ENCODE measurements at regions of chr20 and their contacts with region 1.

Region 1: GRCh38 chr20:55626716-55627115 is 378.6 kb downstream of the CBLN4 start:
- DNase-seq: no peak
- ATAC-seq: no peak
- H3K4me3 ChIP-seq: no peak overlapping the region
- H3K27ac ChIP-seq: no peak overlapping the region
- H3K4me1 ChIP-seq: no peaks in the 10 kb centered on the region
- H3K27me3 ChIP-seq: no peaks in the 10 kb centered on the region
- CTCF ChIP-seq: no peak

Region 2: DNA sequence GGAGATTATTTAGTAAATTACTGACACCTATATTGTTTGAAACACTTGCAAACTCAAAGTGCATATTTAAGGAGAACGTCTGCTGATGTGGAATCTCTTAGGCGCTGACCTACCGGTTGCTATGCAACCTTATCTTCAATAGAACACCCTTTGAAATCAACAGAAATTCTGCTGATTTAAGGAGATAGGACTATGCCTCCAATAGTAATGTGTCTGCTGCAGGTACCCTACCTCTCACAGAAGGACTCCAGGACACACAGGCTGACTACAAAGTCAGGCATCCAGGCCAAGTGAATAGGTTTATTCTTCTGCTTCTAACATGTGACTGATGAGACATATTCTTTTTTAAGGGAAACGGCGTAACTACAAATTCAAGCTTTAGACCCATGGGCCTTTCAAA is 66.9 kb after region 1 on chr20:
- intact Hi-C with region 1: loop called in 1 of 10 experiments (anchors 10 kb)
- DNase-seq: no peak
- ATAC-seq: no peak
- H3K4me3 ChIP-seq: no peak overlapping the region
- H3K27ac ChIP-seq: no peak overlapping the region
- H3K4me1 ChIP-seq: no peaks in the 10 kb centered on the region
- H3K27me3 ChIP-seq: no peaks in the 10 kb centered on the region
- CTCF ChIP-seq: no peak

Region 3: DNA sequence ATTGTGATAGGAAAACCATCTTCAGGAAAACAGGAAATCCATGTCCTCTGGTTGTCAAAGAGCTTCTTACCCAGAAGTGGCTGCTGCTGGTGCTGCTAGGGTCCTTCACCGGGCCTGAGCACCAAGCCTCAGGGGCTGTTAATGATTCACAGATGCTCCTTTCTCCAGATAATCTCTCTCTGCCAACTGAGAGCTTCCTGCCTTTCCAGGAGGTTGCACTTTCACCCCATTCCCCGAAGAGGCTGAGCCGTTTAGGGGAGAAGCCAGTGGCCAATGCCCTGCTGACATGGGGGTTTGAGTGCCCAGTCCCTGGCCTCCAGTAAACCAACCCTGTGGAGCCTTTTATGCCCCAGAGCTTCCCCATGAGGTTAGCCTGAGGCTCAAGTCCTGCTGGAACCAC is 256.2 kb after region 1 on chr20:
- intact Hi-C with region 1: no loop called
- DNase-seq: no peak
- ATAC-seq: no peak
- H3K4me3 ChIP-seq: no peak overlapping the region
- H3K27ac ChIP-seq: no peak overlapping the region
- H3K4me1 ChIP-seq: no peaks in the 10 kb centered on the region
- H3K27me3 ChIP-seq: no peaks in the 10 kb centered on the region
- CTCF ChIP-seq: no peak

Measured in heart right ventricle (tissue), 16 donors.